Aorta (tissue), 5 donors: ENCODE measurements at regions of chr3 and their contacts with region 1.

Region 1: DNA sequence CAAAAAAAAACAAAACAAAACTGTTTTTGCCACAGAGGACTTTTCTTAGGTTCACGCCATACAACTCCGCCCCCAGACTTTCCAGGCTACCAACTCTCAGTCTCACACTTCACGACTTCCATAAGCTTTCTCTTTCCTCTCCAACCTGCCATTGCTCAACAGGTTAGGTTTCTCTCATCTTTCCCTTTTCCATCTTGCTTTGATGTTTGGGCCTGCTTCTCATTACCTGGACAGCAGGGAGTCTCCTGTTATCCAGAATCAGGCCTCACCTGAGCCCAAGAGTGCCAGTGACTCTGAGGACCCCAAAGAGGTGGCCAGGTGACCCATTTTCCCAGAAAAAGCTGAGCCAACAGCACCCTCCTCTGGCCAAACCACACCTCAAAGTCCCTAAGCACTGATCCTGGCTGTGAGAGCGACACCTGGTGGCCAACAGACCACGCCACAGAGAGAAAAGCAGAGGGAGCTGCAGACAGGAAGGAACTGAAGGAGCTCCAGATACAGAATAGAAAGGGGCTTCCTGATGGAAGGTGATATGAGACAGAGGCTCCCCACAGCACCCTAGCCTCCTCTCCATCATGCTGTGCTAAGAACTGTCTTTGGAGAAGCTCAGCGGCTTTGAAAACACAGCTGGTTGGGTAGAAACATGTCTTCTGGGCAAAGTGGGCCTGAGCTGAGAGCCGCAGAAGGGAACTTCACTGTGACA is 4.0 kb downstream of the CCDC51 start:
- DNase-seq: peak; percentile 90 to 94
- ATAC-seq: peak; percentile 84
- H3K4me3 ChIP-seq: no peak overlapping the region
- H3K27ac ChIP-seq: no peak overlapping the region
- H3K4me1 ChIP-seq: no peaks in the 10 kb centered on the region
- H3K27me3 ChIP-seq: no peaks in the 10 kb centered on the region

Region 2: GRCh38 chr3:47731061-47731460 is 704.9 kb before region 1 on chr3:
- intact Hi-C with region 1: no loop called
- DNase-seq: no peak
- ATAC-seq: no peak
- H3K4me3 ChIP-seq: no peak overlapping the region
- H3K27ac ChIP-seq: no peak overlapping the region
- H3K4me1 ChIP-seq: no peaks in the 10 kb centered on the region
- H3K27me3 ChIP-seq: no peaks in the 10 kb centered on the region

Region 3: DNA sequence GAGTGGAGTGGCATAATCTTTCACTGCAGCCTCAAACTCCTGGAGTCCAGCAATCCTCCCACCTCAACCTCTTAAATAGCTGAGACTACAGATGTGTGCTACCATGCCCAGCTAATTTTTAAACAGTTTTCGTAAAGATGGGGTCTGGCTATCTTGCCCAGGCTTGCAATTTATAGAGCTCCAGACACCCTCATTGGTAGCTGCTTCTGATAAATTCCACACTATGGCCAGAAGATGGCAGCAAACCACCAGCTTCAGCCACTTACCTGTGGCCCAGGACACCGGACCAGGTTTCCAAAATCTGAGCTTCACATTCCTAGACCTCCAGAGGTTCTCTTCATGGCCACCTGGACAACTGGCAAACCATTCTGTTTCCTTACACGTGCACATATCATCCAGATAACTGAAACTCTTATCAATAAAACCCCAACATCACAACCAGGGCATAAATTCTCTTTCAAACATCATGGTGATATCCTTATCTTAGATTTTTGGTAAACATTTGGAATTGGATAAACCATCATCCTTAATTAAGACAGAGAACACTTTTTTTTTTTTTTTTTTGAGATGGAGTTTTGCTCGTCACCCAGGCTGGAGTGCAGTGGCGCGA is 35.0 kb before region 1 on chr3:
- intact Hi-C with region 1: loop called (anchors 1 to 2 kb)
- DNase-seq: peak; percentile 49 to 76
- ATAC-seq: peak; percentile 66
- H3K4me3 ChIP-seq: no peak overlapping the region
- H3K27ac ChIP-seq: no peak overlapping the region
- H3K4me1 ChIP-seq: peaks cover 0 to 4% of the 10 kb centered on the region in 2 donors
- H3K27me3 ChIP-seq: no peaks in the 10 kb centered on the region

Region 4: DNA sequence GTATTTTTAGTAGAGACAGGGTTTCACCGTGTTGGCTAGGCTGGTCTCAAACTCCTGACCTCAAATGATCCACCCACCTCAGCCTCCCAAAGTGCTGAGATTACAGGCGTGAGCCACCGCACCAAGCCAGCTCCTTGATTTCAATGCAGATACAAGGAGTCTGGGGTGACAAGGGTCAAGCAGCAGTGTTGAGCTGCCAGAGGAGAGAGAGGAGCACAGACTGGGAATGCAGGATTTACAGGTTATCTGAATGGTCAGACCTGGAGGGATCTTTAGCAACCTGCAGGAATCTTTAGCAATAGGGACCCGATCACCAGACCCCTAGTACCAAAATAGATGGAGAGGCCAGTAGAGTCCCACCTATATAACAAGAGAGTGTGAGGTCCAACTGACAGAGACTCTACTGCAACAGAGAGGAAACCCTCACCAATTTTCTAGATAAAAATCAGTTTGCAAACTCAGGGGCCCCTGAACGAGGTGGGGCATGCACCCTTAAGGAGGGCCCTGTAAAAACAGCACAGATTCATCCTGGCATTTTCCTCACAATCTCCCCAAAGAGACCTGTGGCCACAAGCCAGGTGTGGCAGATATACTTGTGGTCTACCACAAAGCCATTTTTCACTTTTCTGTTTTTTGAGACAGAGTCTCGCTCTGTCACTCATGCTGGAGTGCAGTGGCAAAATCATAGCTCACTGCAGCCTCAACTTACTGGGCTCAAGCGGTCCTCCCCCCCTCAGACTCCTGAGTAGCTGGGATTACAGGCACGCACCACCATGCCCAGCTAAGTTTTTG is 78.7 kb after region 1 on chr3:
- intact Hi-C with region 1: no loop called
- DNase-seq: no peak
- ATAC-seq: no peak
- H3K4me3 ChIP-seq: no peak overlapping the region
- H3K27ac ChIP-seq: no peak overlapping the region
- H3K4me1 ChIP-seq: no peaks in the 10 kb centered on the region
- H3K27me3 ChIP-seq: no peaks in the 10 kb centered on the region